ENCODE measurements at regions of chr9 and their contacts with region 1.

Region 1: DNA sequence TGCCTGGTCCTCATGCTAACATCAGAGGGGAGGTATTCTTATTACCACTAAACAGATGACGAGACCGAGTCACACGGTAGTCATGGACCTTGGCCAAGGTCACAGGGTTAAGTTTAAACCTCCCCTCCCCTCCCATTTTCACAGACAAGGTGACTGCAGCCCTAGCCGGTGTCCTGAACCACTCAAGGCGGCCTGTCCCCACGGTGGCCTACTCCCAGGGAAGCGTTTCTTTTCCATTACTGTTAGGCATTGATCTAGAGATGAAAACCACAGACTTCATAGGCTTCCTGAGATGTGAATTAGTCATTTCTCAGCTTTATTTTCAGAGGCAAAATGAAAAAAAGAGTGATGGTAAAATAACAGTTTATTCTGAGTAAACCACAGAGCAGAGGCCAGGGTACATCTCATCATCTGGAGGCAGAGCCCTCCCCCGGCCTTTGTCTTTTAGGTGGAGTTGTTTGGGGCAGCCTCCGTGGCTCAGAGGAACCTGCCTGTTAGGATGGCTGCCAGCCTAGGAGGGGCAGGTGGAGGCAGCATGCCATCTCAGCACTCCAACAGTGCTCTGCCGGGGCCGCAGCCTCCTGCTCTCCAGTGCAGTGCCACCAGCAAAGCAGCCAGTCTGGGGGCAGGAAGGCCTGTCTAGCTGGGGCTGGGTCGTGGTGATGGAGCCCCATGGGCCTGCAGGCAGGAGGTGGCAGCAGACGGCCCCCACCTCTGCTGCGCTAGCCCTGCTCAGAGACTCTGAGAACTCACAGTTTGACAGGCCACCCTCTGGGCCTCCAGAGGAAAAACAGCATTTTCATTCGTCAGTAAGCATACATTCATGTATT is 71.2 kb downstream of the RAPGEF1 start:
- DNase-seq: peak in 2 of 5 donors; percentile 47 to 49
- ATAC-seq: peak in 3 of 4 donors; percentile 14 to 27 (median 23)
- H3K4me3 ChIP-seq: peak overlapping the region in 1 of 12 donors; percentile 7
- H3K27ac ChIP-seq: peak overlapping the region; percentile 51 to 94 (median 86)
- H3K4me1 ChIP-seq: peaks cover 15 to 88% (median 76%) of the 10 kb centered on the region in 12 donors
- H3K27me3 ChIP-seq: no peaks in the 10 kb centered on the region
- CTCF ChIP-seq: no peak
- POLR2A ChIP-seq: peak in 1 of 2 donors; percentile 31

Region 2: DNA sequence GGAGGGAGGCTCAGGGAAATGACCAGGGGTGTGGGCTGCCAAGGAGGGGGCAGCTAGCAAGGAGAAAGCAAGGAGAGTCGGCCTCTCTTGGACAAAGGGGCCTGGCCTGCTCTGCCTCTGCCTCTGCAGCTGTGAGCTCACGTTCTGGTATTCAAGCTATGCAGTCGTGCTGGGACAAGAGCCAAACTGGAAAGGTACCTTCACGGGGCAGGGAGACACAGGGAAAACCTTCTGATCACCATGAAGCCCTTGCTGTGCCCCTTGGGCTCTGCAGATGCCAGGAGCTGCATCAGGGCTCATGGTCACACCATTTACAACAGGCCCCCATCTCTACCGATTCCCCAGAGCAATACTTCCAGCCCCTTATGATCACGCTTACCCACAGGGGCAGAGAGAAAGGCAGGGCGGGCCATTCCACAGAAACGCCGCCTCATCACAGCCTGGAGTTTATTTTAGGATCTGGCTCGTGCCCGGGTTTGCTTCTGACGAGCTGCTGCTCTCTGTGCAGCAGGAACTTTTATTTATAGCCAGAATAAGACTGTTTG is 60.1 kb before region 1 on chr9:
- intact Hi-C with region 1: loop called in 1 of 10 experiments (anchors 10 kb)
- DNase-seq: peak; percentile 71 to 90 (median 80)
- ATAC-seq: peak; percentile 73 to 81 (median 80)
- H3K4me3 ChIP-seq: peak overlapping the region in 5 of 12 donors; percentile 1 to 41 (median 19)
- H3K27ac ChIP-seq: peak overlapping the region; percentile 73 to 95 (median 84)
- H3K4me1 ChIP-seq: peaks cover 12 to 97% (median 59%) of the 10 kb centered on the region in 12 donors
- H3K27me3 ChIP-seq: no peaks in the 10 kb centered on the region
- CTCF ChIP-seq: no peak
- POLR2A ChIP-seq: no peak

Region 3: GRCh38 chr9:131618071-131618479 is 50.6 kb before region 1 on chr9:
- intact Hi-C with region 1: loop called in 1 of 10 experiments (anchors 5 kb)
- DNase-seq: peak; percentile 76 to 91 (median 89)
- ATAC-seq: peak; percentile 83 to 96 (median 92)
- H3K4me3 ChIP-seq: no peak overlapping the region
- H3K27ac ChIP-seq: peak overlapping the region in 9 of 12 donors; percentile 11 to 74 (median 63)
- H3K4me1 ChIP-seq: peaks cover 0 to 37% (median 15%) of the 10 kb centered on the region in 12 donors
- H3K27me3 ChIP-seq: no peaks in the 10 kb centered on the region
- CTCF ChIP-seq: no peak
- POLR2A ChIP-seq: peak in 1 of 2 donors; percentile 17

Region 4: GRCh38 chr9:131709771-131710454 is 41.3 kb after region 1 on chr9:
- intact Hi-C with region 1: loop called in 5 of 10 experiments (anchors 5 kb)
- DNase-seq: no peak
- ATAC-seq: peak in 3 of 4 donors; percentile 7 to 23 (median 8)
- H3K4me3 ChIP-seq: peak overlapping the region in 11 of 12 donors; percentile 13 to 61 (median 46)
- H3K27ac ChIP-seq: peak overlapping the region; percentile 58 to 93 (median 81)
- H3K4me1 ChIP-seq: peaks cover 4 to 99% (median 56%) of the 10 kb centered on the region in 12 donors
- H3K27me3 ChIP-seq: no peaks in the 10 kb centered on the region
- CTCF ChIP-seq: peak in 1 of 12 donors; percentile 8
- POLR2A ChIP-seq: peak in 1 of 2 donors; percentile 52

Region 5: DNA sequence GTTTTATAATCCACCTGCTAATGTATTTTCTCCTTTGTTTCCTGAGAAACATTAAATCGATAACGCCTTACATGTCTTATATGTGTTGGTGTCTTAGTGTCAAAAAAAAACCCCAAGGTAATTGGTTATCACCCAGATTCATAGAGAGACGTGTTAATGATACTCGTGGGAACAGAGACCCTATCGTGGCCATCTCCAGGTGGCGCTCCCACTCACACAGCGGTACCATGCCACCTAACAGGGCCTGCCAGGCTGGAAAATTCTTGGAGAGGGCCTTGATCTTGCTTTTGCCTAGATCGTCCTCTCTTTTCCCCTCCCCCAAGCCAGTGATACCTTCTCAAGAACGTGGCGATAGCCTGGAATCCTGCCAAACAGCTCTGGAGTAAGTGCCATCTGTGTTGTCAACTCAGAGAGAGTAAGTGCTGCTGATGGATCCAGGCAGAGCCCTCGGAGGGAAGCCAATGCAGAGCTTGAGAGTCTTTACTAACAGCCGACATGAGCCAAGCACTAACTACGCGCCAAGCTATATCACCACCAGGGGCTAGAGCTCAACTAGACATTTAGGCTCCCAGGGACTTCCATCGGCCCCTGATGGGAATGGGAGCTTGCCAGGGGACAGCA is 53.5 kb after region 1 on chr9:
- intact Hi-C with region 1: loop called in 1 of 10 experiments (anchors 5 kb)
- DNase-seq: peak in 4 of 5 donors; percentile 67 to 92 (median 80)
- ATAC-seq: peak; percentile 87 to 96 (median 92)
- H3K4me3 ChIP-seq: no peak overlapping the region
- H3K27ac ChIP-seq: peak overlapping the region in 1 of 12 donors; percentile 26
- H3K4me1 ChIP-seq: peaks cover 0 to 92% (median 46%) of the 10 kb centered on the region in 12 donors
- H3K27me3 ChIP-seq: no peaks in the 10 kb centered on the region
- CTCF ChIP-seq: peak in 4 of 12 donors; percentile 9 to 45 (median 22)
- POLR2A ChIP-seq: no peak

Region 6: DNA sequence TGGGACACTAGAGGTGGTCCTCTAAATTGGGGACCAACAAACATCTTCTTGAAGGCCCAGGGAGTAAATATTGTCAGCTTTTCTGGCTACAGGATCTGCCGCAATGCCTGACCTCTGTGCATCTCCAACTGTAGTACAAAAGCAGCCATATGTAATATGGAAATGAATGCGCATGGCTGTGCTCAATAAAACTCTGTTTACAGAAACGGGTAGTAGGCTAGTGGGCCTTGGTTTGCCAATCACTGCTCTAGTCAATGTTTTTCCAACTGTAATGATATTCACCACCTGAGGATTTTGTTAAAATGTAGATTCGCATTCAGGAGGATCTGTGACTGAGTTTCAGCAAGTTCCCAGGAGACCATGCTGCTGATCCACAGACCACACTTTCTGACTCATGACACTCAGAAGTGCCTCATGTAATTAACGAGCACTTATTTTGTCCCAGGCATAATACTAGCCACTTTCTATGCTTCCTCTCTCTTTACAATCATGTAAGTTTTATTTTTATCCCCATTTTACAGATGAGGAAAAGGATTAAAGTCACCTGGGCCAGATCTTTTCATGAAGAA is 314.1 kb after region 1 on chr9:
- intact Hi-C with region 1: no loop called
- DNase-seq: no peak
- ATAC-seq: no peak
- H3K4me3 ChIP-seq: no peak overlapping the region
- H3K27ac ChIP-seq: no peak overlapping the region
- H3K4me1 ChIP-seq: peaks cover 0 to 22% (median 10%) of the 10 kb centered on the region in 12 donors
- H3K27me3 ChIP-seq: no peaks in the 10 kb centered on the region
- CTCF ChIP-seq: no peak
- POLR2A ChIP-seq: no peak

Region 7: GRCh38 chr9:132260846-132261245 is 592.2 kb after region 1 on chr9:
- intact Hi-C with region 1: no loop called
- DNase-seq: no peak
- ATAC-seq: no peak
- H3K4me3 ChIP-seq: no peak overlapping the region
- H3K27ac ChIP-seq: no peak overlapping the region
- H3K4me1 ChIP-seq: peaks cover 0 to 24% (median 6%) of the 10 kb centered on the region in 12 donors
- H3K27me3 ChIP-seq: no peaks in the 10 kb centered on the region
- CTCF ChIP-seq: no peak
- POLR2A ChIP-seq: no peak

Measured in heart left ventricle (tissue), 16 donors.